SK-N-SH (cell line): ENCODE measurements at regions of chr6 and their contacts with region 1.

Region 1: GRCh38 chr6:722077-722524 is 29.2 kb upstream of the EXOC2 start:
- DNase-seq: peak; percentile 71
- H3K4me3 ChIP-seq: peak overlapping the region in 1 of 2 experiments; percentile 4; a peak in 1 of 4 replicates
- H3K27ac ChIP-seq: no peak overlapping the region
- H3K4me1 ChIP-seq: no peaks in the 10 kb centered on the region
- H3K27me3 ChIP-seq: peaks cover 15% of the 10 kb centered on the region; the same call in 1 of the 2 replicates
- CTCF ChIP-seq: peak; percentile 97
- EP300 ChIP-seq: no peak
- RAD21 ChIP-seq: peak; percentile 57

Region 2: DNA sequence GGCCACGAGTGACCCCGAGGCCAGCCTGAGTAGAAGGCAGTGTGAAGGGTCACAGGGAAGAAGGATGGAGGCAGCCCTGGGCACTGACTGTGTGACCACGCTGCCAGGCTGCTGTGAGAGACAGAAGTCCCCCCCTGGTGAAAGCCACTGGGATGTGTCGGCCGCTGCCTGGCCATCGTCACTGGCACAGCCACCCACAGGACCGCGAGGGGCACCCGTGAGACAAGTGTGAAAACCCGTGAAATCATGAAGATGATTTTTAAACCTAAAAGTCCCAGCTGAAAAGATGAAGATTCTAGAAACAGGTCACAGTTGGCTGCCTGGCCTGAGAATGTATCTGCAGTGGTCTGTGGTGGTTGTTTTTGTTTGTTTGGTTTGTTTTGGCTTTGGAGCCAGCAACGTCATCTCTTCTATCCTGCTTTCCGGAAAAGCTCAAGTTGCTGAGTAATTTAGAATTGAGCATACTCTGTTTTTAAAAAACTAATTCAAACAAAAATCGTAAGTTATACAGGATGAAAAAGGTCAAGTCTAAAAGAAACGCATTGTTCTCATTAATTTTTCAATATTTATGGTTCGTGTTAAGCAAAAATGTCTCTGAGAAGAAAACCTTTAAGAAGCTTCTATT is 159.9 kb before region 1 on chr6:
- CTCF ChIA-PET with region 1: no interaction called
- POLR2A ChIA-PET with region 1: no interaction called
- DNase-seq: no peak
- H3K4me3 ChIP-seq: no peak overlapping the region
- H3K27ac ChIP-seq: no peak overlapping the region
- H3K4me1 ChIP-seq: no peaks in the 10 kb centered on the region; a peak in 1 of 4 replicates
- H3K27me3 ChIP-seq: no peaks in the 10 kb centered on the region
- CTCF ChIP-seq: no peak
- EP300 ChIP-seq: no peak
- RAD21 ChIP-seq: no peak

Region 3: GRCh38 chr6:689223-689622 is 32.9 kb before region 1 on chr6:
- CTCF ChIA-PET with region 1: interaction called, 12 read pairs
- POLR2A ChIA-PET with region 1: no interaction called
- DNase-seq: no peak
- H3K4me3 ChIP-seq: no peak overlapping the region
- H3K27ac ChIP-seq: no peak overlapping the region
- H3K4me1 ChIP-seq: peaks cover 6 to 9% of the 10 kb centered on the region in 2 experiments; a peak in 3 of 4 replicates
- H3K27me3 ChIP-seq: no peaks in the 10 kb centered on the region
- CTCF ChIP-seq: no peak
- EP300 ChIP-seq: no peak
- RAD21 ChIP-seq: no peak

Region 4: DNA sequence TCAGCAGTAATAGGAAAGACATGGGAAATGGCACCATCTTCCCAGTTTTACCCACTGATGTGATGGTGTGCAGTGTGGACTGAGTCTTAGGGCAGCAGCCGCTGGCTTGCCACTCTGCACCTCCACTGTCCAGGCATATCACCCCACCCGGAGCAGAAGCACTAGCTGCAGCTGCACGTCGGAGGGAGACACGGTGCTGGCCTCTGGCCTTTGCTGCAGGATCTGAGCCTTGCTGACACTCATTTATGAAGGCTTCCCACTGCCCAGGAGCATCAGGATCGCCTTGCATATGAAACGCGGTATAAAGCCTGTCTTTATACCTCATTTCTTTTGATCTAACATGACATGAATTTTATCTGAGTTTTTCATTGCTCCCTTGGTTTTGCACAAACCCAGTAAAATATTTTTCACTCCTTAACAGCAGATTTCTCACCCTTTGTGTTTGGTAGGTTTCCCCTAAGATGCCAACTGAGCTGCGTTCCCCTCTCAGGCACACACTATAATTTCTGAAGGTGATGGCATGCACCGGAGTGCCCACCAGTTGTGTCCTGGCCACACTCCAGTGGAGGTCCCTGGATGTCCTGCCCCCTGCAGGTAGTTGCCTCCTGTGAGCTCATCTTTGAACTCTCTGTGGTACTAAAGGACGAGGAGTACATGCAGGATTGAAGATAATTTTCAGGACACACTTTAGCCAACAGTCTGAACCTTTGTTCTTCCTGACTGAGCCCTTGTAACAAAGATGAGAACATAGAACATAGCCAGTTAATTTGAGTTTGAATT is 20.2 kb before region 1 on chr6:
- CTCF ChIA-PET with region 1: interaction called, 14 read pairs
- POLR2A ChIA-PET with region 1: no interaction called
- DNase-seq: peak; percentile 48
- H3K4me3 ChIP-seq: no peak overlapping the region
- H3K27ac ChIP-seq: no peak overlapping the region
- H3K4me1 ChIP-seq: peaks cover 0 to 7% of the 10 kb centered on the region in 2 experiments; a peak in 1 of 4 replicates
- H3K27me3 ChIP-seq: peaks cover 3% of the 10 kb centered on the region; the same call in 1 of the 2 replicates
- CTCF ChIP-seq: peak; percentile 20
- EP300 ChIP-seq: no peak
- RAD21 ChIP-seq: no peak

Region 5: GRCh38 chr6:710601-711571 is 11.2 kb before region 1 on chr6:
- CTCF ChIA-PET with region 1: interaction called, 14 read pairs
- POLR2A ChIA-PET with region 1: no interaction called
- DNase-seq: peak; percentile 50
- H3K4me3 ChIP-seq: peak overlapping the region; percentile 41 to 48
- H3K27ac ChIP-seq: no peak overlapping the region
- H3K4me1 ChIP-seq: peaks cover 0 to 10% of the 10 kb centered on the region in 2 experiments; a peak in 1 of 4 replicates
- H3K27me3 ChIP-seq: peaks cover 7% of the 10 kb centered on the region; the same call in 1 of the 2 replicates
- CTCF ChIP-seq: no peak
- EP300 ChIP-seq: no peak
- RAD21 ChIP-seq: no peak

Region 6: GRCh38 chr6:733431-734219 is 11.5 kb after region 1 on chr6:
- CTCF ChIA-PET with region 1: interaction called, 29 read pairs
- POLR2A ChIA-PET with region 1: no interaction called
- DNase-seq: no peak
- H3K4me3 ChIP-seq: no peak overlapping the region
- H3K27ac ChIP-seq: no peak overlapping the region
- H3K4me1 ChIP-seq: peaks cover 0 to 5% of the 10 kb centered on the region in 2 experiments; a peak in 1 of 4 replicates
- H3K27me3 ChIP-seq: peaks cover 49% of the 10 kb centered on the region
- CTCF ChIP-seq: no peak
- EP300 ChIP-seq: no peak
- RAD21 ChIP-seq: no peak